CD4-positive, alpha-beta memory T cell (primary cell): ENCODE measurements at regions of chr13 and their contacts with region 1.

Region 1: GRCh38 chr13:97018029-97018831 is 24.0 kb upstream of the OXGR1 start:
- DNase-seq: peak; percentile 33 to 45 (median 38)
- H3K4me3 ChIP-seq: no peak overlapping the region
- H3K4me3 Mint-ChIP-seq: no peak overlapping the region
- H3K27ac ChIP-seq: no peak overlapping the region
- H3K27ac Mint-ChIP-seq: no peak overlapping the region
- H3K4me1 ChIP-seq: peaks cover 11% of the 10 kb centered on the region
- H3K4me1 Mint-ChIP-seq: peaks cover 6 to 15% (median 11%) of the 10 kb centered on the region in 4 donors
- H3K27me3 ChIP-seq: peaks cover 4% of the 10 kb centered on the region
- H3K27me3 Mint-ChIP-seq: peaks cover 35 to 38% of the 10 kb centered on the region in 2 donors

Region 2: DNA sequence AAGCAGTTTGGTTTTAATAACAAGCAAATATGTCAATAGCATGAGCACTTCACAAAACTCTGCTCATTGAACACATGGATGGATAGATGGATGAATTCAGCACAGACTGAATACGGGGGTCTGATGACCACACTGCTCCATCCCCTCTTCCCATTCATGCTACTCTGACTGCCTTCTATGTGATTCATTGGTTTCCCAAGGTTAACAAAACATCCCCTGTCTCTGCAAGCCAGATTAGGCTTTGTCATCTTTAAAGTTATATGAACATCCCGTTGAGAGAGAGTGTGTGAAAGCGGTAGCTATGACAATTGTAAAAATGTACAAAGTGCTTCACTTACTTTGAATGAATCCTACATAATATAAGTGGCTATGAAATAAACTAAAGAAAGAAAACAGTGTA is 276.5 kb before region 1 on chr13:
- CTCF ChIA-PET with region 1: no interaction called
- POLR2A ChIA-PET with region 1: no interaction called
- intact Hi-C with region 1: no loop called
- DNase-seq: no peak
- H3K4me3 ChIP-seq: no peak overlapping the region
- H3K4me3 Mint-ChIP-seq: no peak overlapping the region
- H3K27ac ChIP-seq: no peak overlapping the region
- H3K27ac Mint-ChIP-seq: no peak overlapping the region
- H3K4me1 ChIP-seq: no peaks in the 10 kb centered on the region
- H3K4me1 Mint-ChIP-seq: no peaks in the 10 kb centered on the region
- H3K27me3 ChIP-seq: no peaks in the 10 kb centered on the region
- H3K27me3 Mint-ChIP-seq: no peaks in the 10 kb centered on the region

Region 3: GRCh38 chr13:97030705-97031452 is 12.6 kb after region 1 on chr13:
- CTCF ChIA-PET with region 1: interaction called, 10 read pairs
- POLR2A ChIA-PET with region 1: no interaction called
- intact Hi-C with region 1: no loop called
- DNase-seq: no peak
- H3K4me3 ChIP-seq: no peak overlapping the region
- H3K4me3 Mint-ChIP-seq: no peak overlapping the region
- H3K27ac ChIP-seq: no peak overlapping the region
- H3K27ac Mint-ChIP-seq: no peak overlapping the region
- H3K4me1 ChIP-seq: no peaks in the 10 kb centered on the region
- H3K4me1 Mint-ChIP-seq: peaks cover 0 to 14% (median 4%) of the 10 kb centered on the region in 4 donors
- H3K27me3 ChIP-seq: no peaks in the 10 kb centered on the region
- H3K27me3 Mint-ChIP-seq: peaks cover 9 to 16% of the 10 kb centered on the region in 2 donors

Region 4: GRCh38 chr13:97359181-97360057 is 341.2 kb after region 1 on chr13:
- CTCF ChIA-PET with region 1: no interaction called
- POLR2A ChIA-PET with region 1: no interaction called
- intact Hi-C with region 1: loop called (anchors 1 kb)
- DNase-seq: peak; percentile 50 to 62 (median 56)
- H3K4me3 ChIP-seq: no peak overlapping the region
- H3K4me3 Mint-ChIP-seq: no peak overlapping the region
- H3K27ac ChIP-seq: no peak overlapping the region
- H3K27ac Mint-ChIP-seq: peak overlapping the region in 2 of 7 donors; percentile 26 to 43
- H3K4me1 ChIP-seq: no peaks in the 10 kb centered on the region
- H3K4me1 Mint-ChIP-seq: peaks cover 3 to 6% (median 4%) of the 10 kb centered on the region in 4 donors
- H3K27me3 ChIP-seq: no peaks in the 10 kb centered on the region
- H3K27me3 Mint-ChIP-seq: no peaks in the 10 kb centered on the region